Activated CD4-positive, alpha-beta memory T cell treated with anti-CD3 and anti-CD28 coated beads for 36 hours (primary cell): ENCODE measurements at regions of chr13 and their contacts with region 1.

Region 1: DNA sequence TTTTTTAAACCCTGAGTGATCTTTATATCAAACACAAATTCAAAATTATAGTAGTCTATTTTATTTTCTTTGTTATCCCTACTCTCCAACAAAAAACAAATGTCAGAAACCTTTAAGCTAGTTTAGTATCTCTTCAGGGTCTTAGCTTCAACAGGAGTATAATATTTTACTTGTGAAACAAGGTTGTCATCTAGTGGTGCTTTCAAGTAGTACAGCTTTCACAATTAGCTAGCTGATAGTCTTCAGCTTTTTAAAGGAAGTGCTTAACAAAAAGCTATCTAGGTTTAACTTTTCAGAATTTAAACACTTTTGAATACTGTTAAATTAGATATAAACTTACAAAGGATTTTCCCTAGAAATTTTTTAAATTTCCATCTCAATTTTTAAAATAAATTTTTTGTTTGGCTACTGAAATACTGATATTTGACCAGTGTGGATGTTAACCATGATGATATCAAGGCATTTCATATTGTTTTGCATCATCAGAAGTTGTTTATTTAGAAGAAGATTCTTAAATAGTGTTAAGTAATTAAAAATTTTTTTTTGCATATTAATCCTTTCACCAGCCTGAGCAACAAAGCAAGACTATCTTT is 34.2 kb downstream of the TDRD3 start:
- DNase-seq: no peak
- H3K4me3 Mint-ChIP-seq: no peak overlapping the region
- H3K27ac Mint-ChIP-seq: no peak overlapping the region
- H3K4me1 Mint-ChIP-seq: peaks cover 27% of the 10 kb centered on the region
- H3K27me3 Mint-ChIP-seq: no peaks in the 10 kb centered on the region

Region 2: GRCh38 chr13:59677966-59678814 is 753.0 kb before region 1 on chr13:
- CTCF ChIA-PET with region 1: interaction called, 22 read pairs
- POLR2A ChIA-PET with region 1: no interaction called
- intact Hi-C with region 1: loop called (anchors 1 kb)
- DNase-seq: no peak
- H3K4me3 Mint-ChIP-seq: no peak overlapping the region
- H3K27ac Mint-ChIP-seq: no peak overlapping the region
- H3K4me1 Mint-ChIP-seq: no peaks in the 10 kb centered on the region
- H3K27me3 Mint-ChIP-seq: no peaks in the 10 kb centered on the region

Region 3: GRCh38 chr13:59890054-59890453 is 541.1 kb before region 1 on chr13:
- CTCF ChIA-PET with region 1: no interaction called
- POLR2A ChIA-PET with region 1: no interaction called
- intact Hi-C with region 1: no loop called
- DNase-seq: no peak
- H3K4me3 Mint-ChIP-seq: no peak overlapping the region
- H3K27ac Mint-ChIP-seq: no peak overlapping the region
- H3K4me1 Mint-ChIP-seq: no peaks in the 10 kb centered on the region
- H3K27me3 Mint-ChIP-seq: no peaks in the 10 kb centered on the region

Region 4: DNA sequence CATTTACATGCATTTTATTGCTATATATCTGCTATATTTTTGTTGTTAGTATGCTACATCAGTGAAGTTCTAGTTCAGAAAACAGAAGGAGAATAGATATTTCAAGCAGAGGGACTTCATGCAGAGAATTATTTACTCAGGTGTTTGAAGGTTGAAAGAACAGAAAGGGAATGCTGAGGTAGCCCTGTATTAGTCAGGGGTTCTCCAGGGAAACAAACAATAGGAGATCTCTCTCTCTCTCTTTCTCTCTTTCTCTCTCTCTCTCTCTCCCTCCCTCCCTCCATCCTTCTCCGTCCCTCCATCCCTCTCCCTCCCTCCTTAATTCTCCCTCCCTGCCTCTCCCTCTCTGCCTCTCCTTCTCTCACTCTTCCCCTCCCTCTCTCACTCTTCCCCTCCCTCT is 148.5 kb before region 1 on chr13:
- CTCF ChIA-PET with region 1: no interaction called
- POLR2A ChIA-PET with region 1: no interaction called
- intact Hi-C with region 1: no loop called
- DNase-seq: no peak
- H3K4me3 Mint-ChIP-seq: no peak overlapping the region
- H3K27ac Mint-ChIP-seq: no peak overlapping the region
- H3K4me1 Mint-ChIP-seq: no peaks in the 10 kb centered on the region
- H3K27me3 Mint-ChIP-seq: no peaks in the 10 kb centered on the region

Region 5: GRCh38 chr13:60335531-60335930 is 95.7 kb before region 1 on chr13:
- CTCF ChIA-PET with region 1: interaction called, 8 read pairs
- POLR2A ChIA-PET with region 1: no interaction called
- intact Hi-C with region 1: loop called (anchors 10 kb)
- DNase-seq: no peak
- H3K4me3 Mint-ChIP-seq: no peak overlapping the region
- H3K27ac Mint-ChIP-seq: no peak overlapping the region
- H3K4me1 Mint-ChIP-seq: no peaks in the 10 kb centered on the region
- H3K27me3 Mint-ChIP-seq: no peaks in the 10 kb centered on the region

Region 6: DNA sequence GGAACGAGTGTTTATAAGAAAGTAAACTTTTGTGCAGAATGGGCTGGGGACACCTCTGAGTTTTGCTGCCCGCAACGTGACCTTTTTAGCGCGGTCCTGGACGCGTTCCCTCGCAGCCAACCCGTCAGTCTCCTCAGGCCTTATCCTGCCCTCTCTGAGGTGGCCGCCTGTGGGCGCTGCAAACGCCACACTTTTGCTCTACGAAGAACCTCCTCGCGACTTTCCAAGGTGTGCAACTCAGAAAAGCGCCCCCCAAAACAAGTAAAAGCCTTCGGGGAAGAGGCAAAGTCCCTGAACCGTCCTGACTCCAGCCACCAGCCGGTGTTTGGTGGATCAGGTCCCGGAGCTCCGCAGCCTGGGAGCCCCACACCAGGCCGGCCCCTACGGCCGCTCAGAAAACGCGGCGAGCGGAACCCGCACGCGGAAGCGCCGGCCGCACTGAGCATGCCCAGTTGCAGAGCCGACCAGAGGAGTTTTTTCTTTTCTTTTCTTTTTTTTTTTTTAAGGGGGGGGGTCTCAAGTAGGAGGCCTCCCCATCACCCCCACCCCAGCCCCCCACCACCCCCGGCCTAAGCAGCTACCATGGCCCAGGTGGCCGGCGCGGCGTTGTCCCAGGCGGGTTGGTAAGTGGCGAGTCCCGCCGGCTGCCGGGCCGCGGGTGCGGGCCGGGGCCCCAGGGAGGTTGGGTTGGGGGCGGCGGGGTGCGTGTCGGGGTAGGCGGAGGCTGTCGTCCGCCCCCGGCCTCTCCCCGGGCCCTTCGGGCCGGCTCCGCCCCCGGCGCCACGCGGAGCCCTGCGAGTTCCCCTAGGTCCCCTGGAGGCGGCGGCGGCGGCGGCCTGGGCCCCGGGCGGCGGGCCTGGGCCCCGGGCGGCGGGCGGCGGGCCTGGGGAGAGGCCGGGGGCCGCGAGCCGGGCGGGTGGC is 34.2 kb before region 1 on chr13 and contains the start of gene TDRD3:
- CTCF ChIA-PET with region 1: interaction called, 12 read pairs
- POLR2A ChIA-PET with region 1: interaction called, 4 read pairs
- intact Hi-C with region 1: loop called (anchors 1 kb)
- DNase-seq: peak; percentile 89
- H3K4me3 Mint-ChIP-seq: peak within 1 kb of the TSS; percentile 90
- H3K27ac Mint-ChIP-seq: peak within 1 kb of the TSS; percentile 95
- H3K4me1 Mint-ChIP-seq: peaks cover 31% of the 10 kb centered on the region
- H3K27me3 Mint-ChIP-seq: no peaks in the 10 kb centered on the region
- total RNA-seq, gene TDRD3: 16.4 to 16.5 TPM

Region 7: GRCh38 chr13:60411983-60412382 is 19.2 kb before region 1 on chr13:
- CTCF ChIA-PET with region 1: interaction called, 9 read pairs
- POLR2A ChIA-PET with region 1: no interaction called
- intact Hi-C with region 1: loop called (anchors 2 kb)
- DNase-seq: no peak
- H3K4me3 Mint-ChIP-seq: no peak overlapping the region
- H3K27ac Mint-ChIP-seq: no peak overlapping the region
- H3K4me1 Mint-ChIP-seq: peaks cover 52% of the 10 kb centered on the region
- H3K27me3 Mint-ChIP-seq: no peaks in the 10 kb centered on the region

Region 8: GRCh38 chr13:60707878-60708277 is 276.7 kb after region 1 on chr13:
- CTCF ChIA-PET with region 1: no interaction called
- POLR2A ChIA-PET with region 1: no interaction called
- intact Hi-C with region 1: no loop called
- DNase-seq: no peak
- H3K4me3 Mint-ChIP-seq: no peak overlapping the region
- H3K27ac Mint-ChIP-seq: no peak overlapping the region
- H3K4me1 Mint-ChIP-seq: no peaks in the 10 kb centered on the region
- H3K27me3 Mint-ChIP-seq: no peaks in the 10 kb centered on the region